Naive thymus-derived CD4-positive, alpha-beta T cell (primary cell): ENCODE measurements at regions of chr4 and their contacts with region 1.

Region 1: GRCh38 chr4:163535657-163536056 is 41.2 kb downstream of the TMA16 start:
- DNase-seq: no peak
- ATAC-seq: no peak
- H3K4me3 ChIP-seq: no peak overlapping the region
- H3K4me3 Mint-ChIP-seq: no peak overlapping the region
- H3K27ac ChIP-seq: no peak overlapping the region
- H3K27ac Mint-ChIP-seq: peak overlapping the region in 1 of 9 donors; percentile 8
- H3K4me1 ChIP-seq: no peaks in the 10 kb centered on the region
- H3K4me1 Mint-ChIP-seq: no peaks in the 10 kb centered on the region
- H3K27me3 ChIP-seq: no peaks in the 10 kb centered on the region
- H3K27me3 Mint-ChIP-seq: no peaks in the 10 kb centered on the region

Region 2: GRCh38 chr4:163523791-163524365 is 11.8 kb before region 1 on chr4:
- CTCF ChIA-PET with region 1: no interaction called
- POLR2A ChIA-PET with region 1: no interaction called
- intact Hi-C with region 1: loop called in 1 of 2 experiments (anchors 2 kb)
- DNase-seq: no peak
- ATAC-seq: no peak
- H3K4me3 ChIP-seq: no peak overlapping the region
- H3K4me3 Mint-ChIP-seq: no peak overlapping the region
- H3K27ac ChIP-seq: no peak overlapping the region
- H3K27ac Mint-ChIP-seq: no peak overlapping the region
- H3K4me1 ChIP-seq: no peaks in the 10 kb centered on the region
- H3K4me1 Mint-ChIP-seq: no peaks in the 10 kb centered on the region
- H3K27me3 ChIP-seq: no peaks in the 10 kb centered on the region
- H3K27me3 Mint-ChIP-seq: no peaks in the 10 kb centered on the region